Aorta (tissue), 5 donors: ENCODE measurements at regions of chr9 and their contacts with region 1.

Region 1: DNA sequence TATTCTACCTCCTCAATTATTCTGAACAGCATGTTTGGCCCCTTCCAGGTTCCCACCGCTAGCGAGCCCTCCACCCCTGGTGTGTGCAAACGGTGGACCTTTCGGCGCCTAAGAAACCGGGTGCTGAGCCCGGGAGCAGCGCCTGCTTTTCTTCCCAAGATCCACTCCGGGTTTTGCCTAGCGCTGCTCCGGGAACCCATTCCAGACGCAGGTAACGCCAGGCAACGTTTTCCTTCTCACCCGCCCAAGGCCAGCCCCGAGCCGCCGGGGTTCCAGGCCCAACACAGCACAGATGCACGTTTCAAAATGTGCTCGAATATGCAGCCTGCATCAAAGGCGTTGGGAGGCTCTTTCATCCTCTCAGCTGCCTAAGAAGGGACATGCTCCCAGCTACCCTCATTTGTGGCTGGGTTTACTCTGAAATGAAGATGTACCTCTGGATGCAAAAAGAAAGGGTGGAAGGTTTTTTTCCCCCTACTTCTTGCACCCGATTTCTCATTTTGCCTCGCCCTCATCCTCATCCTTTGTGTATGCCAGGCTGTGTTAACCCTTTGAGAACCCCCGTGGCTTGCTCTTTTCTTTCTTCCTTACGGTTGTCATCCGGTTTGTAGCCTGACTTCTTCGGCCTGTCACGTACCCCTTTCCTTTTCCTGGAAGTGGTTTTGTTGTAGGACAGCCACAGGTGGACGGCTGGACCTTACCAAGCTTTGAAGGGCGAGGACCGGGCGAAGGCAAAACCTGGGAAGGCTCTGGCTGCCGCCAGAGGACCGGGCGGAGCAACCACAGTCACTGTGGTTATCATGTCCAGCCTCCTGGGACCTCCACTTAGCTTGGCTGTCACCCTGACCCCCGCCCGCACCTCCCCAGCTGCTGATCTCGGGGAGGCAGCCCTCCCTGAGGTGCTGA is 226.9 kb downstream of the SMARCA2 start:
- DNase-seq: peak; percentile 83 to 91
- ATAC-seq: peak; percentile 96
- H3K4me3 ChIP-seq: peak overlapping the region; percentile 50 to 72
- H3K27ac ChIP-seq: peak overlapping the region in 1 of 2 donors; percentile 16
- H3K4me1 ChIP-seq: no peaks in the 10 kb centered on the region
- H3K27me3 ChIP-seq: no peaks in the 10 kb centered on the region

Region 2: DNA sequence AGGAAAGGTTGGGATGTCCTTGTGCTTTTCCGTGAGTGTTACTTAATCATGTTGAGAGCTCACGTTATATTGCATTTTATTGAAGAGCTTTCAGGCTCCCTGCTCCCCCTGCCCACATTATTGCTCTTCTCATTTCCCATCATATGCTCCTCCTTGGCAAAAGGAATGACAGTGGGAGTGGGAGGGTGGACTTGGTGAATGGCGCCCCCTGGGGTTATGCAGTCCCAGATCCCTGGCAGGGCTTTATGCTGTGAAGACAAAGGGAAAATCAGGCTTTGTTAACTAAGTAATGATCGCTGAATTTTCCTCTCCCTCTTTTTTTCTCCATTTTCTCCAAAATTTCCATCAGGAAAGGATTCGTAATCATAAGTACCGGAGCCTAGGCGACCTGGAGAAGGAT is 60.3 kb before region 1 on chr9:
- intact Hi-C with region 1: no loop called
- DNase-seq: no peak
- ATAC-seq: no peak
- H3K4me3 ChIP-seq: no peak overlapping the region
- H3K27ac ChIP-seq: no peak overlapping the region
- H3K4me1 ChIP-seq: no peaks in the 10 kb centered on the region
- H3K27me3 ChIP-seq: no peaks in the 10 kb centered on the region

Region 3: DNA sequence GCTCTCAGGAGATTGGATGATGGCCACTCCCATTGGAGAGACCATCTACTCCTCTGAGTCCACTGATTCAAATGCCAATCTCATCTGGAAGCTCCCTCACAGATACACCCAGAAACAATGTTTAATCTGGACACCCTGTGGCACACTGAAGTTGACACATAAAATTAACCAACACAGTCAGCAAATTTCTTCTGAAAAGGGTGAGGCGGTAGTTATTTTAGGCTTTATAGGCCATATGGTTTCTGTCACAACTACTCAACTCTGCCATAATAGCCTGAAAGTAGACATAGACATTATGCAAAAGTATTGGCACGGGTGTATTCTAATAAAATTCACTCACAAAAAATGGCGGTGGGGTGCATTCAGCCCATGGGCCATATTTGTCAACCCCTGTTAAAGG is 135.0 kb after region 1 on chr9:
- intact Hi-C with region 1: no loop called
- DNase-seq: no peak
- ATAC-seq: no peak
- H3K4me3 ChIP-seq: no peak overlapping the region
- H3K27ac ChIP-seq: no peak overlapping the region
- H3K4me1 ChIP-seq: no peaks in the 10 kb centered on the region
- H3K27me3 ChIP-seq: no peaks in the 10 kb centered on the region

Region 4: GRCh38 chr9:2849941-2850340 is 607.9 kb after region 1 on chr9:
- intact Hi-C with region 1: loop called in 1 of 2 experiments (anchors 10 kb)
- DNase-seq: no peak
- ATAC-seq: no peak
- H3K4me3 ChIP-seq: no peak overlapping the region
- H3K27ac ChIP-seq: no peak overlapping the region
- H3K4me1 ChIP-seq: peaks cover 0 to 2% of the 10 kb centered on the region in 2 donors
- H3K27me3 ChIP-seq: no peaks in the 10 kb centered on the region